ENCODE measurements at regions of chr3 and their contacts with region 1.

Region 1: GRCh38 chr3:120417272-120417911 is 33.4 kb downstream of the FSTL1 start:
- DNase-seq: peak; percentile 93 to 97 (median 96)
- H3K4me3 ChIP-seq: peak overlapping the region in 6 of 7 experiments; percentile 63 to 80 (median 69)
- H3K27ac ChIP-seq: peak overlapping the region; percentile 41 to 80
- H3K4me1 ChIP-seq: peaks cover 4 to 25% (median 13%) of the 10 kb centered on the region in 4 experiments
- H3K27me3 ChIP-seq: no peaks in the 10 kb centered on the region

Region 2: DNA sequence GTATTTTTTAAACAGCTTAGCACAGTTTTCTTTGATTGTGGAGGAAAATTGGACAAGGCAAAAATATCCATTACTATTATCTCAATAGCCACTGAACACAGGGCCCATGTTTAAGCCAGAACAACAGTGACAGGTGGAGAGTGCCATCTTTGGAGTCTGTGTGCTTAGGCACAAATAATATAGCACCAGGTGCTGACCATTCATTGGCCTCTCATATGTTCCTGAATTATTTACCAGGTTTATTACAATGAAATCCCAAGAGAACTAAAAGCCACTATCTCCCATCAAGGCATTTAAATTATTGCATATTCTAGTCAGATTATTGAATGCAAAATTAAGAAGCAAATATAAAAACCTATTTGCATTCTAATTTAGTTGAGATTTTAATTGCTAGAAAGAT is 172.0 kb before region 1 on chr3:
- CTCF ChIA-PET with region 1: interaction called, 54 read pairs
- POLR2A ChIA-PET with region 1: no interaction called
- DNase-seq: no peak
- H3K4me3 ChIP-seq: no peak overlapping the region
- H3K27ac ChIP-seq: no peak overlapping the region
- H3K4me1 ChIP-seq: no peaks in the 10 kb centered on the region
- H3K27me3 ChIP-seq: no peaks in the 10 kb centered on the region

Region 3: GRCh38 chr3:120433662-120434331 is 16.4 kb after region 1 on chr3:
- CTCF ChIA-PET with region 1: interaction called, 10 read pairs
- POLR2A ChIA-PET with region 1: no interaction called
- DNase-seq: no peak
- H3K4me3 ChIP-seq: no peak overlapping the region
- H3K27ac ChIP-seq: no peak overlapping the region
- H3K4me1 ChIP-seq: peaks cover 0 to 5% (median 0%) of the 10 kb centered on the region in 4 experiments
- H3K27me3 ChIP-seq: no peaks in the 10 kb centered on the region

Region 4: GRCh38 chr3:120442975-120443517 is 25.7 kb after region 1 on chr3:
- CTCF ChIA-PET with region 1: interaction called, 76 read pairs
- POLR2A ChIA-PET with region 1: no interaction called
- DNase-seq: no peak
- H3K4me3 ChIP-seq: no peak overlapping the region
- H3K27ac ChIP-seq: no peak overlapping the region
- H3K4me1 ChIP-seq: no peaks in the 10 kb centered on the region
- H3K27me3 ChIP-seq: no peaks in the 10 kb centered on the region

Region 5: GRCh38 chr3:120506828-120507774 is 89.7 kb after region 1 on chr3:
- CTCF ChIA-PET with region 1: interaction called, 12 read pairs
- POLR2A ChIA-PET with region 1: interaction called, 3 read pairs
- DNase-seq: peak; percentile 49 to 70 (median 64)
- H3K4me3 ChIP-seq: peak overlapping the region in 1 of 7 experiments; percentile 3
- H3K27ac ChIP-seq: no peak overlapping the region
- H3K4me1 ChIP-seq: peaks cover 0 to 4% (median 0%) of the 10 kb centered on the region in 4 experiments
- H3K27me3 ChIP-seq: peaks cover 0 to 2% (median 0%) of the 10 kb centered on the region in 5 experiments

Region 6: GRCh38 chr3:120558771-120559241 is 141.4 kb after region 1 on chr3:
- CTCF ChIA-PET with region 1: interaction called, 21 read pairs
- POLR2A ChIA-PET with region 1: interaction called, 6 read pairs
- DNase-seq: peak; percentile 97 to 98 (median 98)
- H3K4me3 ChIP-seq: peak overlapping the region; percentile 8 to 77 (median 63)
- H3K27ac ChIP-seq: peak overlapping the region; percentile 92 to 96
- H3K4me1 ChIP-seq: peaks cover 4 to 26% (median 22%) of the 10 kb centered on the region in 4 experiments
- H3K27me3 ChIP-seq: no peaks in the 10 kb centered on the region

Region 7: DNA sequence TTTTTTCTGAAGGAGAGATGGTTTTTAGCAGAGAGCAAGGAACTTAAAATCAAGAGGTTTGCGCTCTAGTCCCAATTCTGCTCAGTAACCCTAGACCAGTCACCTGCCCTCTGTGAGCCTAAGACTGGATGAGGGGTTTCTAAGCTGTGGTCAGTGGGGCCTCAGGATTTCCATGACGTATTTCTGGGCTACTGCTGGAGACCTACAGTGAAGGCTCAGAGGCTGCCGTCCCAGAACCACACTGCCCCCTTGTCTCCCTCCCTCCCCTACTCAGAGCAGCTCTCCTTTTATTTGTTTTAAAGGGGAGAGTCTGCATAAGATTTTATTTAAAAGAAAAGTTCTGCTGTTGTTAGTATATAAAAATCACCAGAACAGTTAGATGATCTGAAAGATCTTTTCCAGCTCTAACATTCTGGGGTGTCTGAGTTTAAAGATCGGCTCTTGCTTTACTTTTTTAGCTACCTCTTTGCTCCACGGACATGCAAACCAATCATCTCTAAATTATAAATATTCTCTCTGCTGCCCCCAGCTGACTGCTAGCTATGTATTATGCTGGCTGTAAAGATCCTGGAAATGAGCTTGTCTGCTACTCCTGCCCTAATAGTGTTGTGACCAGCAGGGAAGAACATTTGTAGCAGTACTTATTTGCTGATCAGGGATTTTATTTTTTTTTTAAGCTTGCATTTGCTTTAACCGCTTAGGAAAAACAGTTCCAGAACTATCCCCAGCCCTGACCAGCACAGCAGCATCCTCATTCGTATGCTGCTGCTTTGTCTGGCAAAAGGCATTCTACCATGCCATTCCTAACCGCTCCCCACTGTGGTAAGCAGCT is 150.2 kb after region 1 on chr3:
- CTCF ChIA-PET with region 1: interaction called, 10 read pairs
- POLR2A ChIA-PET with region 1: interaction called, 3 read pairs
- DNase-seq: peak; percentile 44 to 64 (median 62)
- H3K4me3 ChIP-seq: peak overlapping the region in 4 of 7 experiments; percentile 20 to 63 (median 40)
- H3K27ac ChIP-seq: no peak overlapping the region
- H3K4me1 ChIP-seq: peaks cover 0 to 6% (median 0%) of the 10 kb centered on the region in 4 experiments
- H3K27me3 ChIP-seq: no peaks in the 10 kb centered on the region

Measured in common myeloid progenitor, CD34-positive (primary cell).